CD4-positive, alpha-beta T cell (primary cell): ENCODE measurements at regions of chrX and their contacts with region 1.

Region 1: DNA sequence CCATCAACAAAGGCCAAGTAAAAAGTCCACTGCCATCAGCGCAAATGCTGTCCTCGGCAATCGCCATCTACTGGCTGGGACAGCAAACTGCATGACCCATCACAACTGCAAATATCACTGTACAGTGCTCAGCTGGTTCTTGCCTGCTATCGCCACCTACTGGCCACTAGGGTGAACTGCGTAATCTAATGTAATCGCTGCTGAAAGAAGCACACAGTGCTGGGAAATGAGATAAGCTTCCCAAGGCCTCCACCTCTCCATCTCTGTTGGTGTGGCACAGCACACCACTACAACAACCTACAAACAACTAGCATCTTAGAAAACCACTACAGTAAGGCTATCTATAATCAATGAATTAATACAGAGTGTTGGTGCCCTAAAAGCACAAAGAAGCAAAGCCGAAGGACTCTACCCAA is 298.3 kb downstream of the TEX13A start:
- DNase-seq: peak; percentile 18 to 73 (median 42)
- ATAC-seq: peak; percentile 97
- H3K4me3 ChIP-seq: no peak overlapping the region
- H3K4me3 Mint-ChIP-seq: no peak overlapping the region
- H3K27ac ChIP-seq: no peak overlapping the region
- H3K27ac Mint-ChIP-seq: no peak overlapping the region
- H3K4me1 ChIP-seq: no peaks in the 10 kb centered on the region
- H3K4me1 Mint-ChIP-seq: no peaks in the 10 kb centered on the region
- H3K27me3 ChIP-seq: no peaks in the 10 kb centered on the region
- H3K27me3 Mint-ChIP-seq: no peaks in the 10 kb centered on the region
- CTCF ChIP-seq: peak; percentile 73

Region 2: GRCh38 chrX:104195489-104196084 is 726.6 kb before region 1 on chrX:
- CTCF ChIA-PET with region 1: no interaction called
- POLR2A ChIA-PET with region 1: no interaction called
- intact Hi-C with region 1: loop called in 1 of 2 experiments (anchors 10 kb)
- DNase-seq: peak in 3 of 14 experiments; percentile 34 to 53 (median 52)
- ATAC-seq: no peak
- H3K4me3 ChIP-seq: no peak overlapping the region
- H3K4me3 Mint-ChIP-seq: no peak overlapping the region
- H3K27ac ChIP-seq: no peak overlapping the region
- H3K27ac Mint-ChIP-seq: no peak overlapping the region
- H3K4me1 ChIP-seq: no peaks in the 10 kb centered on the region
- H3K4me1 Mint-ChIP-seq: no peaks in the 10 kb centered on the region
- H3K27me3 ChIP-seq: no peaks in the 10 kb centered on the region
- H3K27me3 Mint-ChIP-seq: no peaks in the 10 kb centered on the region
- CTCF ChIP-seq: peak; percentile 62

Region 3: GRCh38 chrX:104935581-104935980 is 13.4 kb after region 1 on chrX:
- CTCF ChIA-PET with region 1: interaction called, 10 read pairs
- POLR2A ChIA-PET with region 1: no interaction called
- intact Hi-C with region 1: no loop called
- DNase-seq: no peak
- ATAC-seq: no peak
- H3K4me3 ChIP-seq: no peak overlapping the region
- H3K4me3 Mint-ChIP-seq: no peak overlapping the region
- H3K27ac ChIP-seq: no peak overlapping the region
- H3K27ac Mint-ChIP-seq: no peak overlapping the region
- H3K4me1 ChIP-seq: no peaks in the 10 kb centered on the region
- H3K4me1 Mint-ChIP-seq: no peaks in the 10 kb centered on the region
- H3K27me3 ChIP-seq: no peaks in the 10 kb centered on the region
- H3K27me3 Mint-ChIP-seq: no peaks in the 10 kb centered on the region
- CTCF ChIP-seq: no peak